Astrocyte of the cerebellum (primary cell): ENCODE measurements at regions of chr1 and their contacts with region 1.

Region 1: GRCh38 chr1:87949711-87950110 is 621.0 kb downstream of the LMO4 start:
- DNase-seq: no peak
- H3K4me3 ChIP-seq: no peak overlapping the region
- CTCF ChIP-seq: no peak

Region 2: DNA sequence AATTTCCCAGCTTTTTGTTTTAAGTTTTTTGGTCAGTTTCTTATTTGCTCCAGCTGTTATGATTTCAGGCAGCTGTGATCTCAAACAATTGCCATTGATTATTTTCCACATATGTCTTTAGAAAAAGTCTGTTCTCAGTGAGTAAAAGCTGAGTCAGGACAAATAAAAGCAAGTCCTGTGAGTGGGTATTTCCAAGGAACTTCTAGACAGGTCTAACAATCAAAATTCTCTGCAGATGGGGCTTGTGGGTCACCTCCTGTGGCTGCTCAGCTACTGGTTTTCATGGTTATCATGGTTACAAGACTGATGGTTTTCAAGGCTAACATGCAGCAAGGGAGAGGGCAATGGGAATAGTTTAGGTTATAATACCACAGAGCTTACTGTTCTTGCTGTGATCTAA is 35.3 kb before region 1 on chr1:
- in situ Hi-C with region 1: loop called (anchors 5 kb)
- DNase-seq: peak; percentile 47
- H3K4me3 ChIP-seq: no peak overlapping the region
- CTCF ChIP-seq: no peak